ENCODE measurements at regions of chr12 and their contacts with region 1.

Region 1: DNA sequence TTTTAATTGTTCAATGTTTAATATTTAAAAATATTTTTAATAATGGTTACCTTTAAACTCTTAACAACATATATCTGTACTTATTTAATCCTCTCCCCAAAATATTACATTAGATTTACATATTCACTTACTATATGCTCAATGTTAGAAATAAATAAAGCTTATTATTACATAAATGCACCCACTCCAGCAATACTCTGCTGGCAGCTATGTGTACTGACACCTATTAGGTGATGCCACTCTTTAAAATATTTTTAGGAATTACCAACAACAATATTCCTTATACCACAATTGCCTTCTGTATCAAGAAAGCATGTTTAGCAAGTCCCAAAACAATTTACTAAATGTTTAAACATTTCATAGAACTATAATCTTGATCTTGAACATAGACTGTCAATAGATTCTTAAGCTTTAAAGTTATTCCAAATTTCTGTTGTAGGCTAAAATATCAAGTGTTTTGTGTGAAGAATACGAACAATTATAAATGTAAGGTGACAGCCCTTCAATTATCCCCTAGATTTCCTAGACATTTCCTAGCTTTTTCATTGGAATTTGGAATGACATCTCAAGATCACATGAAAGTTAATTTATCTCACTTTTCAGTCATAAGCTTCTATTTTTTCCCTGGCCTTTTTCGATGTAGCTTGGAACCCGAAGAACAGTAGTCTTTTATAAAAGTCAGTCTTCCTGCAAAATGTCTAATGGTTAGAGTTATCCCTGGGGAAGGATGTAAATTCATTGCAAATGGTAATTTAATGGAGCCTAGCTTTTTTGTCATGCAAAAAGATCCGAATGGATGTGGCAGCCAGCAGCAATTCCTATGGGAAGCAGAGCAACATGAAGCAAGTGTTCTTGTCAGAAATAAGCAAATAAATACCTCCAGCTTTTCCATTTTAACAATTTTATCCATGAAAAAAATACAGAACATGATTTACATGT is 907.5 kb upstream of the ATXN7L3B start:
- DNase-seq: no peak
- H3K4me3 ChIP-seq: no peak overlapping the region
- CTCF ChIP-seq: no peak

Region 2: GRCh38 chr12:73678353-73678752 is 48.2 kb after region 1 on chr12:
- in situ Hi-C with region 1: loop called (anchors 5 kb)
- DNase-seq: no peak
- H3K4me3 ChIP-seq: no peak overlapping the region
- CTCF ChIP-seq: no peak

Region 3: GRCh38 chr12:73699318-73699717 is 69.2 kb after region 1 on chr12:
- in situ Hi-C with region 1: no loop called
- DNase-seq: no peak
- H3K4me3 ChIP-seq: no peak overlapping the region
- CTCF ChIP-seq: no peak